K562 (cell line): ENCODE measurements at regions of chr2 and their contacts with region 1.

Region 1: DNA sequence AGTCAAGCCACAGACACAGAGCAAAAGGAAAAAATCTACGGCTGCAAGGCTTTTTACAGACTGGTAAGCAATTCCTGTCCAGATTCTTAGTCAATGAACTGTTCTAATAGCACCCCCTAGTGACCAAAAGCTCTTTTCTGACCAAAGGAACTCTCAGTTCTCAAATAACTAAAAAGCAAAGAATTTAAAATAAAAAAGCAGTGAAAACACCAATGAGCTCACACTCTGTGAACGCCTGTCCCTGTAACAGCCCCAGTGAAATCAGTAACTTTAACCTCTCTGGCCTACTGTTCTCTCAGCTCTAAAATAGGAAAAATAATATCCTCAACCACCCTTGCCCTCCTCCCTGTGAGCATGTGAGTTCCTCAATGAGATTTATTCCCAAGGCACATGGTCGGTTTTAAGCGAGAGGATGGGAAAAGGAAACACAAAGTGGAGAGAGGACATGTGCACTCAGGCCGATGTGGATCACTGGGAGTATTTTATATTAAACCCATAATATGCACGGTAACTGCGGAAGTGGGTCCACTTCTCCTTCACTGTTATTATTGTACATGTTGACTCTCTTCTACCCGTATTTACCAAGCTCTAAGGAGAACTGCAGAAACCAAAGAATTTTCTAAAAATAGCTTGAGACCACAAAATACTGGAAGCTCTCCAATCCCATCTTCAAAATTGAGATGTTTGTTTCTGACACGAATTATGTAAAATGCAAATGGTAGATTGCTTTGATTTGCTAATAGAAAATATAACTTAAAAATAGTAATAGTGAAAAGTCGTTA is 128.5 kb downstream of the STK39 start:
- DNase-seq: peak; percentile 32 to 76 (median 34)
- ATAC-seq: peak; percentile 94
- H3K4me3 ChIP-seq: no peak overlapping the region
- H3K27ac ChIP-seq: no peak overlapping the region
- H3K4me1 ChIP-seq: no peaks in the 10 kb centered on the region
- H3K27me3 ChIP-seq: 0 out of 5 replicates have a peak, but pooled peaks cover 0 to 3% of the 10 kb centered on the region in 2 experiments
- CTCF ChIP-seq: peak; percentile 54 to 87 (median 72); a peak in 4 of 6 replicates
- EP300 ChIP-seq: no peak
- POLR2A ChIP-seq: no peak
- RAD21 ChIP-seq: peak; percentile 88 to 90

Region 2: GRCh38 chr2:166539340-166540162 is 1579.4 kb before region 1 on chr2:
- CTCF ChIA-PET with region 1: interaction called, 12 read pairs
- POLR2A ChIA-PET with region 1: no interaction called
- in situ Hi-C with region 1: loop called (anchors 10 kb)
- intact Hi-C with region 1: loop called (anchors 1 kb)
- DNase-seq: peak; percentile 46 to 70 (median 56)
- ATAC-seq: peak; percentile 95
- H3K4me3 ChIP-seq: no peak overlapping the region
- H3K27ac ChIP-seq: no peak overlapping the region
- H3K4me1 ChIP-seq: no peaks in the 10 kb centered on the region
- H3K27me3 ChIP-seq: no peaks in the 10 kb centered on the region
- CTCF ChIP-seq: peak; percentile 60 to 86 (median 76)
- EP300 ChIP-seq: no peak
- POLR2A ChIP-seq: no peak
- RAD21 ChIP-seq: peak; percentile 92 to 94

Region 3: DNA sequence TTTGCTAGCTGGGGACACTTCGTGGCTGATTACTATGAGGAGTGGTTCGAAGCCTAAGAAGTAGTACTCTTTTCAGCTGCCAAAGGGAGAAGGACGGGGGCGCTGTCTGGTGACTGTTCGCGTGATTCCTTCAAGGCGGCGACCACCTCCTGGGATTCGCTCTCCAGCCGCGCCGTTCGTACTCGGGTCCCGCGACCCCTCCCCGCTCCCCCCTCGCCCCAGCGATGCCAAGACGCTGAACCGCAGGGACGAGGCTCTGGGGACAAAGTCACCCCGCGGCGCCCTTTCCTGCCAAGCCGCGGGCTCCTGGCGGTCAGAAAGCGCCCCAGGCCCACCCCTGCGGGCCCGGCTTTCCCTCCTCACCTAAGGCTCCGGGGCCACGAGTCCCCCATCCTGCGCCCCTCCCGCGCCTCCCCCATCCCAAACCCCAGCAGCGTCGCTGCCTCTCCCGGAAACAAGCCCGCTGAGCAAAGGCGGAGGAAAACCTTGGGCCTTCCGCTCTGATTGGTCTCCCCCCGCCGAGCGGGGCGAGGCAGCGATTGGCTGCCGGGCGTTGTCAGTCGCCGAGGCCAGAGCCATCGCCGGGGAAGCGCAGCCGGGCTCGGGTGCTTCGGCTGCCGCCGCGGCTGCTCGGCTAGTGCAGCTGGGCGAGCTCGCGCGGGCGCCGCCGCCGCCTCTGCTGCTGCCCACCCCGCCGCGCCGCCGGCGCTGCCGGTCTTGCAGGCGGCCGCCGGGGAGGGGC is 826.3 kb before region 1 on chr2:
- CTCF ChIA-PET with region 1: no interaction called
- POLR2A ChIA-PET with region 1: no interaction called
- in situ Hi-C with region 1: no loop called
- intact Hi-C with region 1: loop called (anchors 10 kb)
- DNase-seq: peak; percentile 53 to 76 (median 58)
- ATAC-seq: peak; percentile 99
- H3K4me3 ChIP-seq: peak within 1 kb of the TSS; percentile 37
- H3K27ac ChIP-seq: no peak within 1 kb of the TSS
- H3K4me1 ChIP-seq: peaks cover 0 to 12% of the 10 kb centered on the region in 2 experiments; a peak in 2 of 5 replicates
- H3K27me3 ChIP-seq: no peaks in the 10 kb centered on the region
- CTCF ChIP-seq: no peak
- EP300 ChIP-seq: no peak
- POLR2A ChIP-seq: no peak
- RAD21 ChIP-seq: no peak

Region 4: GRCh38 chr2:167595839-167596471 is 523.0 kb before region 1 on chr2:
- CTCF ChIA-PET with region 1: no interaction called
- POLR2A ChIA-PET with region 1: no interaction called
- in situ Hi-C with region 1: no loop called
- intact Hi-C with region 1: loop called (anchors 5 kb)
- DNase-seq: no peak
- ATAC-seq: no peak
- H3K4me3 ChIP-seq: no peak overlapping the region
- H3K27ac ChIP-seq: no peak overlapping the region
- H3K4me1 ChIP-seq: no peaks in the 10 kb centered on the region
- H3K27me3 ChIP-seq: no peaks in the 10 kb centered on the region
- CTCF ChIP-seq: no peak
- EP300 ChIP-seq: no peak
- POLR2A ChIP-seq: no peak
- RAD21 ChIP-seq: no peak

Region 5: GRCh38 chr2:167964650-167965413 is 154.1 kb before region 1 on chr2:
- CTCF ChIA-PET with region 1: interaction called, 8 read pairs
- POLR2A ChIA-PET with region 1: no interaction called
- in situ Hi-C with region 1: no loop called
- intact Hi-C with region 1: loop called (anchors 1 kb)
- DNase-seq: peak in 2 of 4 experiments; percentile 27 to 36
- ATAC-seq: peak; percentile 18; the same call in 2 of the 3 replicates
- H3K4me3 ChIP-seq: no peak overlapping the region
- H3K27ac ChIP-seq: peak overlapping the region; percentile 58; the same call in 2 of the 3 replicates
- H3K4me1 ChIP-seq: peaks cover 7 to 46% of the 10 kb centered on the region in 2 experiments; a peak in 4 of 5 replicates
- H3K27me3 ChIP-seq: no peaks in the 10 kb centered on the region
- CTCF ChIP-seq: peak; percentile 34 to 58 (median 36); a peak in 4 of 6 replicates
- EP300 ChIP-seq: no peak; the same call in 1 of the 2 replicates
- POLR2A ChIP-seq: no peak
- RAD21 ChIP-seq: peak; percentile 58 to 60